WTC11 (cell line): ENCODE measurements at regions of chr17 and their contacts with region 1.

Region 1: GRCh38 chr17:82030470-82031302 is 792 bp upstream of the RAC3 start:
- DNase-seq: peak; percentile 91
- ATAC-seq: peak; percentile 50
- H3K4me3 Mint-ChIP-seq: peak overlapping the region; percentile 73
- H3K27ac Mint-ChIP-seq: no peak overlapping the region
- H3K4me1 Mint-ChIP-seq: peaks cover 14% of the 10 kb centered on the region
- H3K27me3 Mint-ChIP-seq: no peaks in the 10 kb centered on the region
- CTCF ChIP-seq: peak; percentile 85

Region 2: DNA sequence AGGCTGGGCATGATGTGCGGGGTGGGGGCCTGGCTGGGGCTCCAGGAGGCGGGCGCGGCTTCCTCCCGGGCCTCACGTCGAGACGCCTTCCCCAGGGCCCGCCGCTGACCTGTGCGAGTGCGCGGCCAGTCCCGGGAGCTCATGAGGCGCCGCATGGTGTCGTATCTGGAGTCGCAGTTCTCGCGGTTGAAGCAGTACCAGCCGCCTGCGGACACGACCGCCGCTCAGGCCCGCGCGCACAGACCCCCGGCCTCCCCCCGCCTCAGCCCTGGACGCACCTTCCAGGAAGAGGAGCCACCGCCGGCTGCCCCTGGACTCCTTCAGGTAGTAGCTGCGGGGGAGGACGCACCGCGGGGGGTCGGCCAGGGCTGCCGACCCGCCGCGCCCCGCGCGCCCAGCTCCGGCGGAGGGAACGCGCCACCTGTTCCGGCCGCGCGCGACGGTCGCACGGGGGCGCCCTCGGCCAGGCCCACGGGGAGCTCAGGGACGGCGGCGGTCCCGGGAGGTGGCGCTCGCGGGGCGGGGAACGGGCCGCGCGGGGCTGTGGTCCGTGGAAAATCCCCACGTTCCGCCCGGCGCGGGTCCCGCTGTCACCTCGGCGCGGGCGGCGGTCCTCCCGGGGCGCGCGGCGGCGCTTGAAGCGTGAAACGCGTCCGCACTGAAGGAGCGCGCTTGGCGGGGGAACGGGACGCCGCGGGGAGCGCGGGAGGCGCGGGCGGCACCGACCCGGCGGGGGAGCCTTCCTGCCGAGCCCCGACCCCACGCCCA is 71.1 kb before region 1 on chr17:
- CTCF ChIA-PET with region 1: interaction called, 27 read pairs
- POLR2A ChIA-PET with region 1: no interaction called
- DNase-seq: peak; percentile 70
- ATAC-seq: peak; percentile 29
- H3K4me3 Mint-ChIP-seq: peak overlapping the region; percentile 51
- H3K27ac Mint-ChIP-seq: no peak overlapping the region
- H3K4me1 Mint-ChIP-seq: 0 out of 2 replicates have a peak, but pooled peaks cover 4% of the 10 kb centered on the region
- H3K27me3 Mint-ChIP-seq: peaks cover 67% of the 10 kb centered on the region
- CTCF ChIP-seq: 0 out of 2 replicates have a peak, but pooled peaks have one; percentile 17

Region 3: GRCh38 chr17:82043507-82043906 is 12.8 kb after region 1 on chr17:
- CTCF ChIA-PET with region 1: interaction called, 25 read pairs
- POLR2A ChIA-PET with region 1: no interaction called
- DNase-seq: no peak
- ATAC-seq: peak; percentile 69
- H3K4me3 Mint-ChIP-seq: no peak overlapping the region
- H3K27ac Mint-ChIP-seq: no peak overlapping the region
- H3K4me1 Mint-ChIP-seq: peaks cover 27% of the 10 kb centered on the region
- H3K27me3 Mint-ChIP-seq: peaks cover 6% of the 10 kb centered on the region; the same call in 1 of the 2 replicates
- CTCF ChIP-seq: no peak

Region 4: DNA sequence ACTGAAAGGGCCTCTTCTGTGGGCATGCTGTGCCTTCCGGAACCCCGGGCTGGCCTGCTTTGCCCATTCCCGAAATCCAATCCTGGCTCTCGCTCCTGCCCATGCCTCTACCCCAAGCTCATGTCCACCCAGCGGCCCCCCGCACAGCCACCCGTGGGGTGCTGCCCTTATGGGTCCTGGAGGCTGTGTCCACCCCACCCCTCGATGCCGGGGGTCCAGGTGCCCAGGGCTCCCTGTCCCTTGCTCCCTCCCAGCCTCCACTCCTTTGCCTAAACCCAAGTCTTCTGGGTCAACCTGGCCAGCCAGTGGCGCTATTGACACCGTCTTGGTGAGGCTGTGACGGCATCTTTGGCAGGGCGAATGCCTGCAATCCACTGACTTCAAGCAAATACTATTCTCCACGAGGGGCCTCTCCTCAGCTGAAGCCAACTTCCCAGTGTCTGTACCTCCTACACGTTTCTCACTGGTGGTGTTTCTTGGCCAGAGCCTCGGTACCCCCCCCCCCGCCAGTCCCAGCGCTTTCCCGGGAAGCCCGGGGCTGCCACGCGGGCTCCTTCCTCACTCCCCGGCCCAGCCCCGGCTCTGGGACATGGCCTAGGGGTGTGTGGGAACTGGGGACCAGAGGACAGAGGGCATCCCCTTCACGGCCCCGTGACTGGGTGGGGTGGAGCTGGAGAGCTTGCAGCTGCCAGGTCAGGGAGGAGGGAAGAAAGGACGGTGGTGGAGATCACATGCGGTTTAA is 47.1 kb after region 1 on chr17:
- CTCF ChIA-PET with region 1: interaction called, 37 read pairs
- POLR2A ChIA-PET with region 1: interaction called, 3 read pairs
- DNase-seq: no peak
- ATAC-seq: peak; percentile 16
- H3K4me3 Mint-ChIP-seq: no peak overlapping the region
- H3K27ac Mint-ChIP-seq: peak overlapping the region; percentile 79
- H3K4me1 Mint-ChIP-seq: no peaks in the 10 kb centered on the region
- H3K27me3 Mint-ChIP-seq: peaks cover 10% of the 10 kb centered on the region
- CTCF ChIP-seq: no peak

Region 5: DNA sequence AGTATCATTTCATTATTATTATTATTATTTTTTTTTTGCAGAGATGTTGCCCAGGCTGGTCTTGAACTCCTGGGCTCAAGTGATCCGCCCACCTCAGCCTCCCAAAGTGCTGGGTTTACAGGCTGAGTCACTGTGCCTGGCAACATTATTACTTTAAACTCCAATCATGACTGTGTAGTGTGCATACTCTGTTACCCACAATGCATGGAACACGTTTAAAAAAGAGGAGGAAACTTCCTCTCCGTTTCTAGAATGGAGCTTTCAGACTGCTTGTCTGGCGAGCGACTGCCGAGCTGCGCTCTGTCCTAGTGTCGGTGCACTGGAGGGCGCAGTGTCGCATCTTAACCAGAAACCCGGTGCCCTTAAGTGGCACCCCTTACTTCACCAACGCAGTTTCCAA is 89.5 kb after region 1 on chr17:
- CTCF ChIA-PET with region 1: interaction called, 10 read pairs
- POLR2A ChIA-PET with region 1: no interaction called
- DNase-seq: no peak
- ATAC-seq: no peak
- H3K4me3 Mint-ChIP-seq: no peak overlapping the region
- H3K27ac Mint-ChIP-seq: no peak overlapping the region
- H3K4me1 Mint-ChIP-seq: peaks cover 10% of the 10 kb centered on the region
- H3K27me3 Mint-ChIP-seq: peaks cover 3% of the 10 kb centered on the region; the same call in 1 of the 2 replicates
- CTCF ChIP-seq: no peak